ENCODE measurements at regions of chr2 and their contacts with region 1.

Region 1: DNA sequence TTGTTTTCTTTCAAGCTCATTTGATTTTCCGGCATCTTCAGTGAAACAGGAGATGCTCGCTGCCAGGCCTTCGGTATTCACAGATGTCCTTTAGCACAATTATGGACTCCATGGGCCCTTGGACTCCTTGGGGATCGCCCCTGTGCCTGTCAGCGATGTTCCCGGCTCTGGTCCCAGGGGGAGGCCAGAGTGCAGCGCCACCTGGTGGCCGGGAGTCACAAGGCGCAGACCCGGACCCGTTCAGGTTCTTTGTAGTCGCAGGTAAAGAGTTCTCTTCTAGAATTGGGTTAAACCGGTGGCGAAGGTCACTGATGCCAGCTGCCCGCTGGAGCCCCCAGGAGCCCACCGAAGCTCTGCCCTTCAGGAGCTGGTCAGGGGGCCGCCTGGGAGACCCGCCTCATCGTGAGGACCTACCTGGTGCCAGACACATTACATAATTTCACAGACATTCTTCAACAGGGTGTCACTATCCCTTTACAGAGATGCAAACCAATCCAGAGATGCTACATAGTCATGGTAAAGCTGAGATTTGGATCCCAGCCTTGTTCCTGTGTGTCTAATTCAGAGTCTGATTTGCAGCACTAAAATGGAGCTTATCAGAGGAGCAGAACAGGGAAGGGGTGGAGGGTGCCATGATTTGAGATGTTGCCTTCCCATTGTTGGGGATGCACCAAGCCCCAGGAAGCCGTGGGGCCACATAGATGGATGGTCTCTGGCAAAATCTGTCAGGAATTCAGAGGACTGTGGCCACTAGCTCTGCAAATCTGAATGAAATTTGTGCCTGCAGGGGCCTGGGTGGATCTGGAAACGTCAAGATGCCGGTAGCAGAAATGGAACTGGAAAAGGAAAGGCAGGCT is 6.0 kb upstream of the INPP5D start:
- DNase-seq: no peak
- H3K4me3 ChIP-seq: no peak overlapping the region
- H3K27me3 ChIP-seq: peaks cover 4% of the 10 kb centered on the region; the same call in 1 of the 2 replicates
- CTCF ChIP-seq: peak; percentile 96

Region 2: DNA sequence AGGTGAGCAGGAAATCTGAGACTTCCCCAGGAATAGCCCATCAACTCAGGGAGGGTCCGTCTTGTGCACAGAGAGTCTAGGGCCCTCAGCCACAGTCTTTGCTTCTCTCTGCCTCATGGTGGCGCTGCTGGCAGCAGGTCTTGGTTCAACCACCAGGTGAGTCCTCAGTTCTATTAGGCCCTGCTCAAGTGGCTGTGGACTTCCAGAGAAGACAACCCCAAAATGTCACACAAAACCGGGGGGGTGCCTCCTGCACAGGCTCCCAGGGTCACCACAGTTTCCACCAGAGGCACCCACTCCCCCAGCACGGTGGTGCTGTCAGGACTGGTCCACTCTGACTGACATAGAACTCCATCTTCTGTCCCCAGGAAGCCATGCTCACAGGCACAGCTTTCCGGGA is 517.1 kb before region 1 on chr2:
- CTCF ChIA-PET with region 1: no interaction called
- POLR2A ChIA-PET with region 1: no interaction called
- DNase-seq: no peak
- H3K4me3 ChIP-seq: no peak overlapping the region
- H3K27me3 ChIP-seq: peaks cover 3% of the 10 kb centered on the region
- CTCF ChIP-seq: 0 out of 2 replicates have a peak, but pooled peaks have one; percentile 18

Region 3: GRCh38 chr2:232854082-232854481 is 200.1 kb before region 1 on chr2:
- CTCF ChIA-PET with region 1: interaction called, 33 read pairs
- POLR2A ChIA-PET with region 1: no interaction called
- DNase-seq: peak; percentile 58
- H3K4me3 ChIP-seq: no peak overlapping the region
- H3K27me3 ChIP-seq: no peaks in the 10 kb centered on the region
- CTCF ChIP-seq: no peak

Region 4: GRCh38 chr2:232871835-232872736 is 182.1 kb before region 1 on chr2:
- CTCF ChIA-PET with region 1: interaction called, 10 read pairs
- POLR2A ChIA-PET with region 1: no interaction called
- DNase-seq: no peak
- H3K4me3 ChIP-seq: no peak overlapping the region
- H3K27me3 ChIP-seq: peaks cover 2% of the 10 kb centered on the region
- CTCF ChIP-seq: no peak

Region 5: DNA sequence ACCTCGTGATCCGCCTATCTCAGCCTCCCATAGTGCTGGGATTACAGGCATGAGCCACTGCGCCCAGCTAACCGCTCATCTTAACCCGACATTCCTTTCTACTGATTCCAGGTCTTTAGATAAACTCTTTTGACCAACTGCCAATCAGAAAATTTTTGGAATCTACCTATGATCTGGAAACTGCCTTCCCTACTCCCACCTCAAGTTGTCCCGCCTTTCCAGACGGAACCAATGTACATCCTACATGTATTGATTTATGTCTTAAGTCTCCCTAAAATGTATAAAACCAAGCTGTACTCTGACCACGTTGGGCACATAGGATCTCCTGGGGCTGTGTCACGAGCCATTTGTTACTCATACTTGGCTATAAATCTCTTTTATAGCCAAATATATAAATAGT is 24.8 kb before region 1 on chr2:
- CTCF ChIA-PET with region 1: interaction called, 14 read pairs
- POLR2A ChIA-PET with region 1: no interaction called
- DNase-seq: no peak
- H3K4me3 ChIP-seq: no peak overlapping the region
- H3K27me3 ChIP-seq: no peaks in the 10 kb centered on the region; the same call in 1 of the 2 replicates
- CTCF ChIP-seq: no peak

Region 6: DNA sequence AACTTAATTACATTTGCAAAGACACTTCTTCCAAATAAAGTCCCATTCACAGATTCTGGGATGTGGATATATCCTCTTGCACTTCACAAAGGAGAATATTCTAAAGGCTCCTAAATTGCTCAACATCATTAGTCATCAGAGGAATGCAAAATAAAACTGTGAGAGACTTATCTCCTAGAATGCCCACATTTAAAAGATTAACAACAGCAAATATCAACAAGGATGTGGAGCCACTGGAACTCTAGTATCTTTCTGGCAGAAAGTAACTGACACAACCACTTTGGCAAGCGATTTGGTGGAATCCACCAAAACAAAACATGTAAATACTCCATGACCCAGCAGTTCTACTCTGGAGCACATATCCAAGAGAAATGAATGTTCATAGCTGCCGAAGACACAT is 17.1 kb before region 1 on chr2:
- CTCF ChIA-PET with region 1: interaction called, 74 read pairs
- POLR2A ChIA-PET with region 1: no interaction called
- DNase-seq: no peak
- H3K4me3 ChIP-seq: no peak overlapping the region
- H3K27me3 ChIP-seq: peaks cover 3% of the 10 kb centered on the region; the same call in 1 of the 2 replicates
- CTCF ChIP-seq: no peak

Region 7: DNA sequence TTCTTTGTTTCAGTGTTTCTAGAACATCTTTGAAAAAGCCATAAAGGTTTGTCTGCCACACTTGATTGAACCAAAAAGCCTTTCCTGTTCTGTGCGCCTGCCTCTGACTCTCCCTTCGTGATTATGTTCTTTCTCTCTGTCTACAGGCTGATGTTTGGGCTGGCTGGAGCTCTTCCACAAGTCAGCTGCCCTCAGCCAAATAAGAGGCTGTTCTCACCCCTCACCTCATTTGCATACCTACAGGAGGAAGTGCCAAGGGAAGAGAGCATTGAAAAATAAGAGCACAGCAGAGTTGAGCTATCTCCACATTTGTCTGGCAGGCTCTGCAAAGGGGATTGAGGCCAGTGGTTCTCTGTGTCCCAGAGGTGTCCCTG is 21.8 kb after region 1 on chr2:
- CTCF ChIA-PET with region 1: interaction called, 10 read pairs
- POLR2A ChIA-PET with region 1: no interaction called
- DNase-seq: no peak
- H3K4me3 ChIP-seq: no peak overlapping the region
- H3K27me3 ChIP-seq: peaks cover 3% of the 10 kb centered on the region
- CTCF ChIP-seq: no peak